Panc1 (cell line): ENCODE measurements at regions of chr1 and their contacts with region 1.

Region 1: GRCh38 chr1:32005522-32005921 is 8.1 kb upstream of the KHDRBS1 start:
- DNase-seq: no peak
- ATAC-seq: no peak
- H3K4me3 ChIP-seq: no peak overlapping the region
- H3K27ac ChIP-seq: no peak overlapping the region
- H3K4me1 ChIP-seq: no peaks in the 10 kb centered on the region
- H3K27me3 ChIP-seq: no peaks in the 10 kb centered on the region
- CTCF ChIP-seq: no peak

Region 2: GRCh38 chr1:30484668-30485067 is 1520.9 kb before region 1 on chr1:
- CTCF ChIA-PET with region 1: no interaction called
- POLR2A ChIA-PET with region 1: no interaction called
- in situ Hi-C with region 1: no loop called
- intact Hi-C with region 1: no loop called
- DNase-seq: no peak
- ATAC-seq: no peak
- H3K4me3 ChIP-seq: no peak overlapping the region
- H3K27ac ChIP-seq: no peak overlapping the region
- H3K4me1 ChIP-seq: no peaks in the 10 kb centered on the region
- H3K27me3 ChIP-seq: no peaks in the 10 kb centered on the region
- CTCF ChIP-seq: no peak

Region 3: DNA sequence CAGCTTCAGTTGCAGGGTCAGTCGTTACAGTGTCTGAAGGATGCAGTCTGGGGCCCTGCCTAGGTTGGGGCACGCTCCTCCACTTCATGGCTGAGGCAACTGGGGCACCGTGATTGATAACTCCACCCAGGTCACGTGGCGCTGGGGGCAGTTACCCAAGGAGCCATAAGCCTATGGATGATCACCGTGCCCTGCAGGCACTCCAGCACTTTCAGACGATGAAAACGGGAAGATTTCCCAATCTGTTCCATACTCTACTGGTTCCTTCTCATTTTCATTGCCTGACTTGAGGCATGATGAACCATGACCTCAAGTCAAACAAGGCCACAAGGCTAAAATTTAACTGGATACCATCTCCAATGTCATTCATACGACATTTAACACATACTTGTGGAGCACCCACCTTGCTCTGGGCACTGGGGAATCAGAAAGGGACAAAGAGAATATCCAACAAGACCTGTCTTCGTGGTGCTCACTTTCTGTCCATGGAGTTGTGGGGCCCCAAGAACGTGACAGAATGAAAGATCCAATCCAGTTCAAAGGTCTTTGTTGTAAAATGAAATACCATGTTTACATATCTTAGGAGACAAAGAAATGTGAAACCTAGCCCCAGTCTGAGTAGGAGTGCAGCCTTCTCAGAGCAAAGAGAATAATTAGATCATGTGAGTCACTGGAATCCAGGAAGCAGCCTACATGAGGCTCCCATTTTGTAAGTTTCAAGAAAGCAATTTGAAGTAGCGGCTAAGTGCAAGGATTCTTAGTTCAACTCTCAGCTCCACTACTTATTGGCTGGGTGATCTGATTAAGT is 150.3 kb before region 1 on chr1:
- CTCF ChIA-PET with region 1: interaction called, 12 read pairs
- POLR2A ChIA-PET with region 1: no interaction called
- in situ Hi-C with region 1: no loop called
- intact Hi-C with region 1: no loop called
- DNase-seq: no peak
- ATAC-seq: no peak
- H3K4me3 ChIP-seq: no peak overlapping the region
- H3K27ac ChIP-seq: no peak overlapping the region
- H3K4me1 ChIP-seq: no peaks in the 10 kb centered on the region
- H3K27me3 ChIP-seq: no peaks in the 10 kb centered on the region
- CTCF ChIP-seq: no peak